Spleen (tissue), 13 donors: ENCODE measurements at regions of chr16 and their contacts with region 1.

Region 1: DNA sequence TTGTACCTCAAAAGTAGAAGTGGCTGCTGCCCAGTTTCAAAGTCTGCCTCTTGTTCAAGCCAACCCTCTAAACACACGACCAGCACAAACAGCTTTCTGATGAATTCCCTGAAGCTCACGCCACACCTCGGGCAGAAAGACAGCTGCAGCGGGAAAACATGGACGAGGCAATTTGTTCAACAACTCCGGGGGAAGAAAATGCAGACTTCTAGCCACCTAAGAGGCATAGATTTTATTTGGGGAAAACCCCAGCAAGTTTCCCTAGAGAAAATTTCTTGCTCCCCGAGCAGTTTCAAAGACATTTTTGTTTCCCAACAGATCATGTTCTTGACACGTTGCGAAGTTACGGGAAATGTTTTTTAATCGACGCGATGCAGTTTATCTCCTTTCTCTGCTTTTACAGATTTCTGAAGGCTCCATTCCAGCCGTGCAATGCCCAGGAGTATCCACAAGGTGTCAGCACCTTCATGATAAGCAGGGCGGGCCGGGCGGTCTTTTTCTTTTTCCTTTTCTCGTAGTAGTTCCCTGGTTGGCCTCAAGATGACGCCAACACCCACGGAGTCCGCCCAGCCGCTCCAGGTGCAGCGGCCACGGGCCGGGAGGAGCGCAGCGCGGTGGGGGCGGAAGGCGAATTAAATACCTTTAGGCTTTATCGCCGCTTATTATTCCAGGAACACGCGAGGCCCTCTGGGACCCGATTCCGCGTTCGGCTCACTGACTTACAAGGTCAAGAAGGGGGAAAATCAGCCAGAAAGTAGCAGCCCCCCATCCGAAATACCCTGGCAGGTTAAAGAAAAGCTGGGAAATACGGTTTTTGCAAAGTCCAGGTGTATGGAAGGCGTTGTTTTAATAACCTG is 2.9 kb upstream of the FOXC2 start:
- DNase-seq: peak; percentile 93
- H3K4me3 ChIP-seq: peak overlapping the region in 4 of 8 donors; percentile 1 to 56 (median 6)
- H3K27ac ChIP-seq: no peak overlapping the region
- H3K4me1 ChIP-seq: peaks cover 4 to 45% (median 37%) of the 10 kb centered on the region in 6 donors
- H3K27me3 ChIP-seq: peaks cover 13 to 99% (median 54%) of the 10 kb centered on the region in 7 donors
- CTCF ChIP-seq: peak; percentile 98 to 100 (median 99)
- POLR2A ChIP-seq: no peak

Region 2: DNA sequence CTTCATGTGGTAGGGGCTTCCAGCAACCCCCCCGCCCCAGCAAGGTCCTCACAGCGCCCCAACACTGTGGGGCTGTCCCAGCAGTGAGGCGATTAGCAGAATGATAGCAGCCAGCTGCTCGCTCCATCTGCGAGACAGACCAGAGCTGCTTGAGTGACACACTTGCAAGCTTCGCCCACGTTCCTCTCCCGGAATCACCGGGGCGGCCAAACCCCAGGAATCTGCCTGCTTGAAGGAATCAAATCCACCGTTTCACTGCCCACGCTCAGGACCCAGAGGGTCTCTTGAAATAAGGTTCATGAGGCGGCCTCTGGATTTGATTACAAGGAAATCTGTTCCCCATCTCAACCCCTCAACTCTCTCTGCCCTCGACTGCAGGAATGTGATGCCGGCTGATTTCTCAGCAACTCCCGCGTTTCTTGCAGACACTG is 397.5 kb after region 1 on chr16:
- intact Hi-C with region 1: no loop called
- DNase-seq: no peak
- H3K4me3 ChIP-seq: no peak overlapping the region
- H3K27ac ChIP-seq: no peak overlapping the region
- H3K4me1 ChIP-seq: peaks cover 0 to 19% (median 7%) of the 10 kb centered on the region in 6 donors
- H3K27me3 ChIP-seq: peaks cover 0 to 88% (median 7%) of the 10 kb centered on the region in 7 donors
- CTCF ChIP-seq: no peak
- POLR2A ChIP-seq: no peak

Region 3: GRCh38 chr16:87062569-87063442 is 499.1 kb after region 1 on chr16:
- intact Hi-C with region 1: loop called (anchors 2 kb)
- DNase-seq: no peak
- H3K4me3 ChIP-seq: no peak overlapping the region
- H3K27ac ChIP-seq: no peak overlapping the region
- H3K4me1 ChIP-seq: peaks cover 0 to 47% (median 16%) of the 10 kb centered on the region in 6 donors
- H3K27me3 ChIP-seq: peaks cover 0 to 68% (median 14%) of the 10 kb centered on the region in 7 donors
- CTCF ChIP-seq: peak; percentile 46 to 81 (median 65)
- POLR2A ChIP-seq: no peak

Region 4: GRCh38 chr16:87278191-87279095 is 714.7 kb after region 1 on chr16:
- intact Hi-C with region 1: loop called (anchors 5 kb)
- DNase-seq: peak; percentile 84
- H3K4me3 ChIP-seq: no peak overlapping the region
- H3K27ac ChIP-seq: no peak overlapping the region
- H3K4me1 ChIP-seq: peaks cover 0 to 6% (median 0%) of the 10 kb centered on the region in 6 donors
- H3K27me3 ChIP-seq: peaks cover 0 to 40% (median 0%) of the 10 kb centered on the region in 7 donors
- CTCF ChIP-seq: peak; percentile 18 to 83 (median 70)
- POLR2A ChIP-seq: no peak

Region 5: DNA sequence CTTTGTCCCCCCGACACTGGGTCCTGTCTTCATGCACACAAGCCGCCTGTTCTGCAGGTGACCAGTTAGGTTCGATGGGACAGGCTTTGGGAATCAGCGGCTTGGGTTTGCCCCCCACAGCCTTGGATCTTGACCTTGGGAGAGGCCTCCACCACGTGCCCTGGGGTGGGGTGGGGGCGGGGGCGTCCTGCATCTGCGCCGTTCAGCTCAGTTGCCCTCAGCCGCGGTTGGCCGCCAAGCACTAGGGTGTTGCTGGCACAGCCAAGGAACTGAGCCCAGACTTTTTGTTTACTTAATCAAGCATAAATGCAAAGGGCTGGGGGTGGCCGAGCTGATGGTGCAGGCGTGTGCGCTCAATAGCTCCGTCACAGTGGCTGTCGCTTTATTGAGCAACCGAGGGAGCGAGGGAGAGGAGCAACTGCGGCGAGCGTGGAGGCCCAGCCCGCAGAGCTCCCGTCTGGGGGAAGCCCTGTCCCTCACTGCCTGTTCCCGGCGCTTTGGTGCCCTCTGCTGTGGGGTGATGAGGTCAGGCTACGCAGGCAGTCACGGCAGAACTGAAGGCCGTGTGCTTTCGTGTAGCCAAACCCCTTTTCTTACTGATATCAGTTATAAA is 1072.5 kb after region 1 on chr16:
- intact Hi-C with region 1: loop called (anchors 10 kb)
- DNase-seq: peak; percentile 93
- H3K4me3 ChIP-seq: peak overlapping the region in 7 of 8 donors; percentile 22 to 65 (median 35)
- H3K27ac ChIP-seq: peak overlapping the region in 4 of 8 donors; percentile 27 to 54 (median 43)
- H3K4me1 ChIP-seq: peaks cover 16 to 22% (median 19%) of the 10 kb centered on the region in 6 donors
- H3K27me3 ChIP-seq: peaks cover 0 to 77% (median 0%) of the 10 kb centered on the region in 7 donors
- CTCF ChIP-seq: peak; percentile 27 to 78 (median 63)
- POLR2A ChIP-seq: no peak